ENCODE measurements at regions of chr17 and their contacts with region 1.

Region 1: GRCh38 chr17:11535231-11535630 is 63.0 kb upstream of the DNAH9 start:
- DNase-seq: no peak
- H3K4me3 ChIP-seq: no peak overlapping the region
- H3K27ac ChIP-seq: no peak overlapping the region
- H3K4me1 ChIP-seq: no peaks in the 10 kb centered on the region
- CTCF ChIP-seq: no peak

Region 2: DNA sequence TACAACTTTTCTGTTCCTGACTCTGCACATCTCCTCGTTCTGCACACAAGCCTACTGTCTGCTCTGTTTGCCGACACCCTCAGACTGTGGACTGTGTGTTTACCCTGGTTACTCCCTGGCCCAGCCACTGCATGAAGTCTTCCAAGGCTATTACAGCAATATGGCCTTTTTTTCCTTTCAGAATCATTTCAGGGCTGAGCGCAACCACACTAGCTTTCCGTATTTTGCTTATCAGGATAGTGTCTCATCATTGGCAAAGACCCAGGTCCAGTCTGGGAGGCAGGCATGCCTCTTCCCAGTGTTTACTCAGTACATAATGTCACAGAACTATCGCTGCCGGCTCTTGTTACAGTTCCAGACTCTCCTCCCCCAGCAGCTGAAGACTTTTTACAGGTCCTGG is 73.2 kb after region 1 on chr17:
- CTCF ChIA-PET with region 1: no interaction called
- POLR2A ChIA-PET with region 1: no interaction called
- intact Hi-C with region 1: loop called (anchors 10 kb)
- DNase-seq: no peak
- H3K4me3 ChIP-seq: no peak overlapping the region
- H3K27ac ChIP-seq: no peak overlapping the region
- H3K4me1 ChIP-seq: no peaks in the 10 kb centered on the region
- CTCF ChIP-seq: no peak